PC-3 (cell line): ENCODE measurements at regions of chr6 and their contacts with region 1.

Region 1: DNA sequence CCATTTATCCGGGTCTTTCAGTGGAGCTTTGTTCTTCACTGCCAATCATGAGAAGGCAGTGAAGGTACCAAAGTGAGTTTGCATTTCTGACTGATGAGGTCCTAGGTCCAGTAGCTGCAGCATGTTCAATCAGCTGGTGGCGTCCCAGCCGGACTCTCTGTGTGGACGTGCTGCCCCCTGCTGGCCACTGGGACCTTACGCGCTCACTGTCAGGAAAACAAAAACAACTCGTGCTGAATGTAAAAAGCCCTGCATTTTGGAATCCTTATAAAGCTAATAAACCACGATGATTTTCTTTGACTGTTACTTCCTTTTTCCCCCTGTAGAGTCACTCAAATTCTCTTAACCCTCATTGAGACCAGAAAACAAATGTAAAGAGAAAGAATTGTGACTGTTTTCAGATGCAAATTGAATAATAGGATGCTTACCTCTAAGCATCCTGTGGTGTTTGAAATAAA is 4.9 kb upstream of the CD24 start:
- DNase-seq: peak; percentile 84
- ATAC-seq: peak; percentile 35
- H3K4me3 ChIP-seq: no peak overlapping the region
- H3K27ac ChIP-seq: no peak overlapping the region
- H3K4me1 ChIP-seq: peaks cover 11% of the 10 kb centered on the region
- H3K27me3 ChIP-seq: no peaks in the 10 kb centered on the region
- CTCF ChIP-seq: peak; percentile 88

Region 2: GRCh38 chr6:106444777-106445507 is 534.5 kb before region 1 on chr6:
- CTCF ChIA-PET with region 1: no interaction called
- POLR2A ChIA-PET with region 1: no interaction called
- intact Hi-C with region 1: loop called (anchors 2 kb)
- DNase-seq: peak; percentile 70
- ATAC-seq: no peak
- H3K4me3 ChIP-seq: no peak overlapping the region
- H3K27ac ChIP-seq: no peak overlapping the region
- H3K4me1 ChIP-seq: peaks cover 32% of the 10 kb centered on the region
- H3K27me3 ChIP-seq: no peaks in the 10 kb centered on the region
- CTCF ChIP-seq: peak; percentile 71

Region 3: DNA sequence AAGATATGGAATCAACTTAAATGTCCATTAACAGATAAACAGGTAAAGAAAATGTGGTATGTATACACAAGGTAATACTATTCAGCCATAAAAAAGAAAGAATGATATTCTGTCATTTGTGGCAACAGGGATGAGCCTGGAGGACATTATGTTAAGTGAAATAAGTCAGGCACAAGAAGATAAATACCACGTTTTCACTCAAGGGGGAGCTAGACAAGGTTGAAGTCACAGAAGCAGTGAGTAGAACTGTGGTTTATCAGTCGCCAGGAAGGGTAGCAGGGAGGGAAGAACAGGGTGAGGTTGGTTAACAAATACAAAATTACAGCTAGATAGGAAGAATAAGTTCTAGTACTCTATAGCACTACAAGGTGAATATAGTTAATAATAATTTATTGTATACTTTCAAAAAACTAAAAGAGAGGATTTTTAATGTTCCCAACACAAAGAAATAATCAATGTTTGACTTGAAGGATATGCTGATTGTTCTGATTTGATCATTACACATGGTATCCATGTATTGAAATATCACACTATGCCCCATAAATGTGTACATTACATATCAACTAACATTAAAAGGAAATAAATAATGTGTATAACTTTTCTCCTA is 371.3 kb before region 1 on chr6:
- CTCF ChIA-PET with region 1: interaction called, 6 read pairs
- POLR2A ChIA-PET with region 1: no interaction called
- intact Hi-C with region 1: loop called (anchors 1 kb)
- DNase-seq: peak; percentile 76
- ATAC-seq: peak; percentile 70
- H3K4me3 ChIP-seq: no peak overlapping the region
- H3K27ac ChIP-seq: no peak overlapping the region
- H3K4me1 ChIP-seq: no peaks in the 10 kb centered on the region
- H3K27me3 ChIP-seq: no peaks in the 10 kb centered on the region
- CTCF ChIP-seq: peak; percentile 68

Region 4: DNA sequence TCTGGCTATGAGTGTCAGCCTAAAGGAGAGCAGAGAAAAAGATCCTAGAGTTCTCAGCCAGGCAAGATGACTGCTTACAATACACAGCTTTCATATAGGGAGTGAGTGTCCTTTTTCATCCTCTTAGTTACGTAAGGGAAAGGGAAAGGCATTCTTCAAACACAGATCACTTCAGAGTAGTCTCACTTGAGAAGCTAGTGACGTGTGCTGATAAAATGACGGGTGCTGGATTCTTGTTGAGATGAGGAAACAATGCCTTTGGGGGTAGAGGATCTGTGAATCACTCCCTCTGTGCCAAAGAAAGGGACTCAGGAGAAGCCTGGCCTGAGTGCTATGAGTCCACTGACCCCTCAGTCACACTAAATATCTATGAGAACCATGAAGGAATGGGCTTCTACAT is 232.8 kb before region 1 on chr6:
- CTCF ChIA-PET with region 1: no interaction called
- POLR2A ChIA-PET with region 1: no interaction called
- intact Hi-C with region 1: loop called (anchors 2 kb)
- DNase-seq: peak; percentile 93
- ATAC-seq: peak; percentile 69
- H3K4me3 ChIP-seq: peak overlapping the region; percentile 44; the same call in 1 of the 2 replicates
- H3K27ac ChIP-seq: peak overlapping the region; percentile 99
- H3K4me1 ChIP-seq: peaks cover 59% of the 10 kb centered on the region
- H3K27me3 ChIP-seq: no peaks in the 10 kb centered on the region
- CTCF ChIP-seq: no peak

Region 5: GRCh38 chr6:106804346-106805335 is 174.8 kb before region 1 on chr6:
- CTCF ChIA-PET with region 1: no interaction called
- POLR2A ChIA-PET with region 1: no interaction called
- intact Hi-C with region 1: no loop called
- DNase-seq: no peak
- ATAC-seq: no peak
- H3K4me3 ChIP-seq: no peak overlapping the region
- H3K27ac ChIP-seq: no peak overlapping the region
- H3K4me1 ChIP-seq: peaks cover 4% of the 10 kb centered on the region
- H3K27me3 ChIP-seq: no peaks in the 10 kb centered on the region
- CTCF ChIP-seq: no peak

Region 6: GRCh38 chr6:106901062-106901461 is 78.4 kb before region 1 on chr6:
- CTCF ChIA-PET with region 1: no interaction called
- POLR2A ChIA-PET with region 1: no interaction called
- intact Hi-C with region 1: no loop called
- DNase-seq: no peak
- ATAC-seq: no peak
- H3K4me3 ChIP-seq: no peak overlapping the region
- H3K27ac ChIP-seq: no peak overlapping the region
- H3K4me1 ChIP-seq: no peaks in the 10 kb centered on the region
- H3K27me3 ChIP-seq: no peaks in the 10 kb centered on the region
- CTCF ChIP-seq: no peak

Region 7: GRCh38 chr6:106913676-106914280 is 65.7 kb before region 1 on chr6:
- CTCF ChIA-PET with region 1: no interaction called
- POLR2A ChIA-PET with region 1: no interaction called
- intact Hi-C with region 1: loop called (anchors 10 kb)
- DNase-seq: peak; percentile 81
- ATAC-seq: peak; percentile 48; the same call in 1 of the 2 replicates
- H3K4me3 ChIP-seq: no peak overlapping the region; the same call in 1 of the 2 replicates
- H3K27ac ChIP-seq: peak overlapping the region; percentile 93
- H3K4me1 ChIP-seq: peaks cover 27% of the 10 kb centered on the region
- H3K27me3 ChIP-seq: no peaks in the 10 kb centered on the region
- CTCF ChIP-seq: no peak

Region 8: GRCh38 chr6:107064579-107065065 is 85.2 kb after region 1 on chr6:
- CTCF ChIA-PET with region 1: no interaction called
- POLR2A ChIA-PET with region 1: no interaction called
- intact Hi-C with region 1: no loop called
- DNase-seq: peak; percentile 32
- ATAC-seq: no peak
- H3K4me3 ChIP-seq: no peak overlapping the region
- H3K27ac ChIP-seq: no peak overlapping the region
- H3K4me1 ChIP-seq: no peaks in the 10 kb centered on the region; the same call in 1 of the 2 replicates
- H3K27me3 ChIP-seq: no peaks in the 10 kb centered on the region
- CTCF ChIP-seq: no peak